ENCODE measurements at regions of chr3 and their contacts with region 1.

Region 1: DNA sequence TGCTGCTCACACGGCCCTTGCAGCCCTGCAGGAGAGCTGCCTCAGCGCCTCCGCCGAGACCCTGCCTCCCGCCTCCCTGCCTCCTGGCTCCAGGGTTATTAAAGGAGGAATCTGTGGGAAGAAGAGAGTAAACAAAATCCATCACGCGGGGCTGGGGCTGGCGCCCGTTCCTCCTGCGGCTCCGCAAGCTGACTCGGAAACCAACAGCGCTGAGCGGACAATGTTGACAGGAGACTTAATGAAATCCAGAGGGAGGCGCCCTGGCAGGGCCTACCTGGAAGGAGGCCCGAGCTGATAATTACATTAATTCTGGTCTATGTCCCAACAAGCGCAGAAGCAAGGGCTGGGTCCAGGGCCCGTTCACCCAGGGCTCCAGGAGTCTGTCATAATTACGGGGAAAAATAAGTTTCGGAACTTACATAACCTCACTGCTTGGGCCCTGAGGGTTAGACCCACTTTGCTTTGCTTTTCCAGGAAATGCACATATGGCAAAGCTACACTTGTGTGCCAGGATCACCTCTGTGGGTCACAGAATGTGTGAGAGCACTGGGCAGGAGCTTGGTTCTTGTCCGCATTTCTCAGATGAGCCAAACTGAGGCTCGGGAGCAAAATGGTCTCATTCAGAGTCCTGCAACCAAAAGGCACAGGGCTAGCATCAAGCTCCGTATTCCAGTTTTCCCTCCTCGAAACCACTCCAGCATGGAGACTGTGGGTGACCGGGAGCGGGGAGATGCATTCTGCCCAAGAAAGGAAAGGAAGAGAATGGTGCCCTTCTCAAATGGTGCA is 43.8 kb upstream of the SLC6A6 start:
- DNase-seq: no peak
- ATAC-seq: no peak
- H3K4me3 Mint-ChIP-seq: no peak overlapping the region
- H3K27ac Mint-ChIP-seq: no peak overlapping the region
- H3K4me1 Mint-ChIP-seq: no peaks in the 10 kb centered on the region
- H3K27me3 Mint-ChIP-seq: no peaks in the 10 kb centered on the region

Region 2: DNA sequence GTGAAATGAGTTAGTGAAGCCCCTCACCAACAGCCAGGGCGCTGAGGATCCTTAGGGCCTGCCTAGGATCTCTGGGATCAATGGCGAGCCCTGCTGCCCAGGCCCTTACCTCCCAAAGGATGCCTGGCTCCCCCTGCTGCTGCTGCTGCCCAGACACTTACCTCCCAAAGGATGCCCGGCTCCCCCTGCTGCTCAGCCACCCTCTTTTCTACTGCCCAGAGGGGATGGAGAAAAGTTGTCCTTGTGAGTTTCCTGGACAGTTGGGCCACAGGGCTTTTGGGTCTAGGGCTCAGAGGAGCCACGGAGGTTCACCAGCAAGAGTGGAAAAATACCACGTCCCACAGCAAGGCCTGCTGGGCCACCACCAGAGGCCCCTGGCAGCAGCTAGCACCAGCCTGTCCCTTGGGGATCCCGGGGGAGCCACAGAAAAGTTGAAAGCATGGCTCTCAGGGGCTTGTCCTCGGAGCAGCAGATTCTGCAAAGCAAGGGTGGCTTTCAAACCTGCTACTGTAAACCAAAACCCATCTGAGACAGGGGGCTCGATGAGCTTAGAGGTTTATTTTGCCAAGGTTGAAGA is 103.2 kb after region 1 on chr3:
- CTCF ChIA-PET with region 1: no interaction called
- POLR2A ChIA-PET with region 1: no interaction called
- intact Hi-C with region 1: no loop called
- DNase-seq: peak; percentile 64
- ATAC-seq: peak; percentile 23
- H3K4me3 Mint-ChIP-seq: no peak overlapping the region
- H3K27ac Mint-ChIP-seq: peak overlapping the region; percentile 83
- H3K4me1 Mint-ChIP-seq: peaks cover 38% of the 10 kb centered on the region
- H3K27me3 Mint-ChIP-seq: no peaks in the 10 kb centered on the region

Region 3: DNA sequence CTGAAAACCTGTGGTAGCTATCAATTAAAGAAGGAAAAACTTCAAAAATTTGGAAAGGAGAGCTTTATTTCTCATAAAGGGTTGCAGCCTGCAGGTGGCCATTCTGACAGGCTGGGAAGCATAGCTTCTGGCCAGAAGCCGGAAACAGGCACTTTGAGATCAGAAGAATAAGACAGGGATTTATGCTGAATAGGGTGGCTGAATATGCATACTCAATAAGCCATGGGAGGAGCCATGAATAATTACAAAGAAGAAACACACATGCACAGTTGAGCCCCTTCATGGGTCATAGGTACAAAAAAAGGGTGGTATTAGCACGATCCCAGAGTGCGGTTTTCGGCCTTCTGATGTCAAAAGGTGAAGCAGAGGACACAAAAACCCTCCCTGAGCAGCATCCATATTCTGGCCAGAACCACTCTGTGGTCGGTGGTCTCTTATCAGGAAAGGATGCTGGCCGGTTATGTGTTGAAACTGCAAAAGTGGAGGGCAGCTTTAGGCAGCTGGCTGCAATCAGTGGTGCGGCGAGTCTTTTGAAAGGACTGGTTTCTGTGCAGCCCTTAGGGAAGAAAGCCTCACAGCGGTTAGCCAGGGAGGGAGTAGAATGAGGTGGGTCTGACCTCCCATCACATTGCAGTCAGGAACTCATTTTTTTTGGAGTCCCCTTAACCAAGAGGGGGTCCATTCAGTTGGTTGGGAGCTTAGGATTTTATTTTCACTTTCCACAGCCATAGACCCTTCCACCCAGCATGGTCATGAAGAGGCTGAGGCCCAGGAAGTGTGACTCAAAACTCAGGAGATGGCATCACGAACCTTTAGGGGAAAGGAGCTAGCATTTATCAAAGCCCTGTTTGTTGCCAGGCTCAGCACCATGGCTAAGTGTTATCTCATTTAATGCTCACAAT is 258.2 kb after region 1 on chr3:
- CTCF ChIA-PET with region 1: no interaction called
- POLR2A ChIA-PET with region 1: no interaction called
- intact Hi-C with region 1: loop called in 1 of 2 experiments (anchors 5 kb)
- DNase-seq: no peak
- ATAC-seq: no peak
- H3K4me3 Mint-ChIP-seq: no peak overlapping the region
- H3K27ac Mint-ChIP-seq: no peak overlapping the region
- H3K4me1 Mint-ChIP-seq: no peaks in the 10 kb centered on the region
- H3K27me3 Mint-ChIP-seq: peaks cover 17% of the 10 kb centered on the region

Region 4: DNA sequence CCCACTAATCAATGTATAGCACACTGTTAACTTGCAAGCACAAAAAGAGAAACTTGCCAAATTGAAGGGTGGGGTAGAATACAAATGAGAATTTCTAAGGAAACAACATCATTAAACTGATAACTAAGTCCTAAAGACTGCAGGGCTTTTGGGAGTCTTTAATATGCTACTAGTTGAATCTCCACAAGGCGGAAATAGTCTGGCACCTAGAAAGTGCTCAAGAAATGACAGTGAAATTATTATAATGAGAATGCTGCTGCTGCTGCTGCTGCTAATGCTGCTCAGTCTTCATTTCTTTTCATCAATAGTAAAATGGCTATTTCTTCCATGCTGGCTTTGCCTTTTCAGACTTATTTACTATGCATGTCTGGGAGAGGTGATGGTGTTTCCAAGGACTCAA is 1334.7 kb after region 1 on chr3:
- CTCF ChIA-PET with region 1: no interaction called
- POLR2A ChIA-PET with region 1: no interaction called
- intact Hi-C with region 1: no loop called
- DNase-seq: no peak
- ATAC-seq: no peak
- H3K4me3 Mint-ChIP-seq: no peak overlapping the region
- H3K27ac Mint-ChIP-seq: no peak overlapping the region
- H3K4me1 Mint-ChIP-seq: no peaks in the 10 kb centered on the region
- H3K27me3 Mint-ChIP-seq: no peaks in the 10 kb centered on the region